Tibial artery (tissue), 4 donors: ENCODE measurements at regions of chr4 and their contacts with region 1.

Region 1: GRCh38 chr4:1130316-1131186 is 17.2 kb upstream of the RNF212 start:
- DNase-seq: peak; percentile 48 to 80
- H3K4me3 ChIP-seq: no peak overlapping the region
- H3K27ac ChIP-seq: no peak overlapping the region
- H3K4me1 ChIP-seq: peaks cover 0 to 5% (median 0%) of the 10 kb centered on the region in 4 donors
- H3K27me3 ChIP-seq: no peaks in the 10 kb centered on the region
- CTCF ChIP-seq: peak; percentile 96 to 100

Region 2: GRCh38 chr4:985123-985830 is 145.3 kb before region 1 on chr4:
- intact Hi-C with region 1: no loop called
- DNase-seq: peak in 1 of 2 donors; percentile 63
- H3K4me3 ChIP-seq: peak overlapping the region in 1 of 2 donors; percentile 12
- H3K27ac ChIP-seq: no peak overlapping the region
- H3K4me1 ChIP-seq: peaks cover 0 to 31% (median 21%) of the 10 kb centered on the region in 4 donors
- H3K27me3 ChIP-seq: no peaks in the 10 kb centered on the region
- CTCF ChIP-seq: no peak

Region 3: DNA sequence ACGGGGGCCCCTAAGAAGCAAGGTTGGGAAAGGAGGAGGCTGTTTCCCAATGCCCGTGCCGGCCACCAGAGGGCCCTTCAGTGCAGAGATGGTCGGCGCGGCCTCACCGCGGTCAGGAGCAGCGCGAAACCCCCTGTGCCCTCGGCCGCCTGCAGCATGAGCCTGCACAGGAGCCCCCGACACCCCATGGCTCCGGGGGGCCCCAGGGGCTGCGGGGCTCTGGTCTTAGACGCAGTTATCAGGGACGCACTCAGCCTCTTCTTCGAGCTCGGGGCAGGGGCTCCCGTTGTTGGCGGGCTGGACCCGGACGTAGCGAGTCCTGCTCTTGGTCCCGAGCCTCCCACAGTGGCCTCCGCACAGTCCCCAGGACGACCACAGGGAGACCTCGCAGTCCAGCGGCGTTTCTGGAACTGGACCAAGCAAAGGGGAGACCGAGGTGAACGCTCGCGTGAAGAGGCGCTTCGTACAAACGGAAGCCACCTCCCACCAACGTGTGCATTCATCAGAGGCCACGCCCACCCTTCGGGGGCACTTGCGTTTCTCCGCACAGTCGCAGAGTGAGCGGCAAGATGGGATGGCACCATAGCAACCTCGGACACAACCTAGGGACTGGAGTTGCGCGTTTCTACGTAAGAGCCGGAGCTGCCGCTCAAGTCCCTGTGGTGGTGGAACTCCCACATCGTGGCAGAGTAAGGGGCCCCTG is 36.8 kb after region 1 on chr4:
- intact Hi-C with region 1: loop called (anchors 5 kb)
- DNase-seq: peak; percentile 77 to 87
- H3K4me3 ChIP-seq: peak overlapping the region; percentile 55 to 58
- H3K27ac ChIP-seq: peak overlapping the region in 1 of 2 donors; percentile 35
- H3K4me1 ChIP-seq: peaks cover 0 to 36% (median 25%) of the 10 kb centered on the region in 4 donors
- H3K27me3 ChIP-seq: peaks cover 0 to 33% of the 10 kb centered on the region in 2 donors
- CTCF ChIP-seq: peak; percentile 89 to 92

Region 4: DNA sequence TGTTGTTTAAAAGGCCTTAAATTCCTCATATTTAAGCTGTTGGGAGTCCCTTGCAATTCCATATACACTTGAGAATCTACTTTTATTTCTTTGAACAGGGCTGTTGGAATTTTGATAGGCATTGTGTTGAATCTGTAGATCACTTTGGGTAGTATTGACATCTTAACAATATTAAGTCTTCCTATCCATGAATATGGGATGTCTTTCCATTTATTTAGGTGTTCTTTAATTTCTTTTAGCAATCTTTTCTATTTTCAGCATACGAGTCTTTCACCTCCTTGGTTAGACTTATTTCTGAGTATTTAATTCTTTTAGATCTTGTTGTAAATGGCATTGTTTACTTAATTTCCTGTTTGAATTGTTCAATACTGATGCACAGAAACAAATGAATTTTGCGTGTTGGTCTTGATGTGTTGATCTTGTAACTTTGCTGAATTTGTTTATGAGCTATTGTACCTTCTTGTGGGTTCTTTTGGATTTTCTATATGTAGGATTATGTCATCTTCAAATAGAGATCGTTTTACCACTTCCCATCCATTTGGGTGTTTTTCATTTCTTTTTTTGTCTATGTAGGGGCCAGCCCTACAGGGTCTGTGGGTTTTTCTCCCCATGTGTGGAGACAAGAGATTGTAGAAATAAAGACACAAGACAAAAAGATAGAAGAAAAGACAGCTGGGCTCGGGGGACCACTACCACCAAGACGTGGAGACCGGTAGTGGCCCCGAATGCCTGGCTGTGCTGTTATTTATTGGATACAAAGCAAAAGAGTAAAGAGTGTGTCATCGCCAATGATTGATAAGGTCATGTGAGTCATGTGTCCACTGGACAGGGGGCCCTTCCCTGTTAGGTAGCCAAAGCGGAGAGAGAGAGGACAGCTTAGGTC is 136.6 kb after region 1 on chr4:
- intact Hi-C with region 1: loop called (anchors 2 kb)
- DNase-seq: no peak
- H3K4me3 ChIP-seq: no peak overlapping the region
- H3K27ac ChIP-seq: no peak overlapping the region
- H3K4me1 ChIP-seq: no peaks in the 10 kb centered on the region
- H3K27me3 ChIP-seq: no peaks in the 10 kb centered on the region
- CTCF ChIP-seq: no peak

Region 5: DNA sequence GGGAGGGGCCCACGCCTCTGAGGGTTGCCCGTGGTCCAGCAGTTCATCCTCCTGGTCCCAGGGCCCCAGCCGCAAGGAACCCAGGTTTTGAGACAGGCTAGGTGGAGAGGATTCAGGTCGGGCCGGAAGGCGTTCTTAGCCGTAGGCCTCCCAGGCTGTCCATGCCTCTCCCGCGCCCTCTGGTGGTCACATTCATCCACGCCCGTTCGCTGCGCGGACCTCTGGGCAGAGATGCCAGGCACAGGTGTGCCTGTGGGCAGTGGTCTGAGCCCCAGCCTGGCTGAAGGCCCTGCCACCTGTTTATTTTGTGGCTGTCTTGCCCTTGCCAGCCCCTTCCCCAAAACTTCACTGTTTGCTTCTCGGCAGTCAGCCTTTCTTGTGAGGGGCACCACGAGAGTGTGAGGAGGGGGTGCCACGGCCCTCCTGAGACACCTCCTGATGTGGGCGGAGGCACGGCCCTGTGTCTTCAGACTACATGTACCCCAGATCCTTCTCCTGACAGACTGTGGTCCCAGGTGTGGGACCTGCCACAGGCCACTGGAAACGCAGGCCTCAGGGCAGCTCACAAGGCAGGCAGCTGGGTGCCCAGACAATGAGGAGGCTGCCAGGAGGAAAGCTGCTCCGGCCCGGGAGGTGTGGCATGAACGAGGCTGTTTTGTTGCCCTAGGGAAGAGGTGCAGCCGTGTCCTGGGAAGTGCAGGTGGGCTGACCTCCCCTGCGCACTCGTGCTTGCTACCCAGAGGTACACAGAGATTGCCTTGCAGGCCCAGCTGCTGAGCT is 221.5 kb after region 1 on chr4:
- intact Hi-C with region 1: loop called (anchors 10 kb)
- DNase-seq: peak; percentile 78 to 87
- H3K4me3 ChIP-seq: no peak overlapping the region
- H3K27ac ChIP-seq: no peak overlapping the region
- H3K4me1 ChIP-seq: peaks cover 0 to 21% (median 14%) of the 10 kb centered on the region in 4 donors
- H3K27me3 ChIP-seq: no peaks in the 10 kb centered on the region
- CTCF ChIP-seq: peak; percentile 83 to 91